Activated CD8-positive, alpha-beta T cell treated with anti-CD3 and anti-CD28 coated beads, Interleukin-2, amount 10 ng/mL, durations not matched to agents 7 days and 5 days (primary cell): ENCODE measurements at regions of chr16 and their contacts with region 1.

Region 1: GRCh38 chr16:49857423-49858181 is 1.7 kb upstream of the ZNF423 start:
- DNase-seq: peak; percentile 57
- ATAC-seq: peak; percentile 31
- H3K4me3 Mint-ChIP-seq: peak overlapping the region; percentile 68
- H3K27ac Mint-ChIP-seq: peak overlapping the region; percentile 46
- H3K4me1 Mint-ChIP-seq: peaks cover 15% of the 10 kb centered on the region
- H3K27me3 Mint-ChIP-seq: peaks cover 44% of the 10 kb centered on the region

Region 2: DNA sequence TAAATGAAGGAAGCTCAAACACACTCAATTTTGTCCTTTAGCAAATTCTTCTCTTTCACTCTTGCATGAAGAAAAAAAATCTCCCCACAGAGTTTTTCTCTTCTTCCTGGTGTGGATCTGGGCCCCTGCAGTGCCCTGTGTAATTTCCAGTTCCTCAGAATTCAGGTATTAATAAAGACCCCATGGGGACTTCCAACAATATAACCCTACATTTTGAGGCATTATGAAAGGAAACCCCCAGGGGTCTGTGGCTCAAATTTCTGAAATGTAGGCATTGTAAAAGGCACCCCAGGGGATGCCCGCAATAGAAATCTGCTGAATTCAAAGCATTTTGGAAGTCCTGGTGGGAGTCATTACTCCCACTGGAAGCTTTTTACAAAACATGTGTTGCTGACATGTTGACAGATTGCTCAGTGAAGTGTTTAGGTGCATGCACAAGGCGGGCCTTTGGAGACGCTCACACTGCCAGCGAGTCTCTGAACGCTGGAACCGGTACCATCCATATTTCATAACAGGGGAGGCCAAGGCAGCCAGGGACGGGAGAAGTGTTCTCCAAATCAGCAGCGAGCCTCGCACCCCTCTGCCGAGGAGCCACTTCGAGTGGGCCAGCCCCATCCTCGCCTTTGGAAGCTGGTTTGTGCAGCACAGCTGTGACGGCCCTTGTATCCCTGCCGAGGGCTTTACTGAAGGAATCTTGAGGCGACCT is 155.7 kb before region 1 on chr16:
- CTCF ChIA-PET with region 1: no interaction called
- POLR2A ChIA-PET with region 1: no interaction called
- DNase-seq: no peak
- ATAC-seq: no peak
- H3K4me3 Mint-ChIP-seq: no peak overlapping the region
- H3K27ac Mint-ChIP-seq: no peak overlapping the region
- H3K4me1 Mint-ChIP-seq: no peaks in the 10 kb centered on the region
- H3K27me3 Mint-ChIP-seq: peaks cover 17% of the 10 kb centered on the region

Region 3: DNA sequence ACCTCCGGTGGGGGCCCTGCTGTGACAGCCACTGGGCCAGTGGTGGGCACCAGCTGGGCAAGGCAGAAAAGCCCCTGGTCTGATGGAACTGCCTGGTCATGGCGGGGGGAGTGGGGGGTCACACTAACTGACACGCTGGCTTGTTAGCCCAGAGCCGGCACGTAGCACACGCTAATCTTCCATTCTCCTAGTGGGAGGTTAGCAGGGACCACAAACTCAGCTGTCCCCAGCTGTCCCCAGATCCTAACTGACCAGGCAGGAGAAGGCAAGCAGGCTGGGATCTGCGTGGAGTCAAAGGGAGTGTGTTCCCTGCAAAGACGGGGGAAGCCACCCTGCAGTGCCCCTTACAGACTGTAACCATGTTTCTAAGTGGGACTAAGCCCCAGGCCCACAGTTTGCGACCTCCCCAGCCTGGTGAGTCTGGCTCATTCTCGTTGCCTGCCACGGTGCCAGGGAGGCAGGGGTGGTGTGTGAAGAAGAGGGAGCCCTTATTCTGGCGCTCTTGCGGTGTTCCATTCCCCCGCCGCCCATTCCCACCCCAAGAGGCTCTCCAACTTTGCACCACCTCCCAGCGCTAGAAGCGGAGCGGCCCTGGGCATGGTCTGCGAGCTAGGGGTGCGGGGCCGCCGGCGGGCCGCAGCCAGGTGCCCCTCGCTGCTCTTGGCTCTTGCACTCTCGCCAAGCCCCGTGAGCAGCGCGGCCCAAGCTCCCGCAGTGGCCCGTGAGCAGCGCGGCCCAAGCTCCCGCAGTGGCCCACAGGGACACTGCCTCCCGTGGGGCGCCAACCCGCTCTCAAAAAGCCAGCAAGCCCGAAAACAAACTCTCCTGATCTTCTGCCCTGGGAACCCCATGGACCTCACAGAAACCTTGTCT is 10.4 kb after region 1 on chr16:
- CTCF ChIA-PET with region 1: interaction called, 15 read pairs
- POLR2A ChIA-PET with region 1: no interaction called
- DNase-seq: no peak
- ATAC-seq: no peak
- H3K4me3 Mint-ChIP-seq: no peak overlapping the region
- H3K27ac Mint-ChIP-seq: no peak overlapping the region
- H3K4me1 Mint-ChIP-seq: no peaks in the 10 kb centered on the region
- H3K27me3 Mint-ChIP-seq: peaks cover 5% of the 10 kb centered on the region

Region 4: DNA sequence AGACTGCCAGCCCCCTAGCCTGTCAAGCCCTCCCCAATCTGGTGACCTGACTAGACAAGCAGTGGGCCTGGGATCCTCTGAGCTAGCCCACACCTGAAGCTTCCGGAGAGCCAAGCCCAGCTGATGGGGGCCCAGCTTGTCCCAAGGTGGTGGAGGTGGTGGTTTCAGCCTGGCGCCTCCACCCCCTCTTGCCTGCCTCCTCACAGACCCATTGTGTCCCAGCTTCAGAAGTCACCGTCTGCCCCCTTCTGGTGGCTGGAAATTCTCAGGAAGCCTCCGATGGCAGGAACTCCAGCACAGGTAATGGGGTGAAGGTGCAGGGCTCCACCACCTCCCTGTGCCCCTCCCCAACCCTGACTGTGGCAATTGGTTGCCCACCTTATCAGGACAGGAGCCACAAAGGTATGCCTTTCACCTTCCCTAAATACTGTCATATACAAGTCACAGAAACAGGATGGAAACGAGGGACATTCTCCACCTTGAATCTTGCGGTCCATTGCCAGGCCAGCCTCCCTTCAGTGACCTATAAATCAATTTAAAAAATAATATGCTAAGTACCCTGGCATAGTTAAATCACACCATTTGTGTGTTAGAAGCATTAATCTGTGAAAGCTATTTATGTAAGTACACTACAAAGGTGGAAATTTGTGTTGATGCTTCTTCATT is 64.3 kb after region 1 on chr16:
- CTCF ChIA-PET with region 1: interaction called, 10 read pairs
- POLR2A ChIA-PET with region 1: no interaction called
- DNase-seq: peak; percentile 56
- ATAC-seq: peak; percentile 68
- H3K4me3 Mint-ChIP-seq: no peak overlapping the region
- H3K27ac Mint-ChIP-seq: no peak overlapping the region
- H3K4me1 Mint-ChIP-seq: no peaks in the 10 kb centered on the region
- H3K27me3 Mint-ChIP-seq: peaks cover 5% of the 10 kb centered on the region